ENCODE measurements at regions of chr15 and their contacts with region 1.

Region 1: DNA sequence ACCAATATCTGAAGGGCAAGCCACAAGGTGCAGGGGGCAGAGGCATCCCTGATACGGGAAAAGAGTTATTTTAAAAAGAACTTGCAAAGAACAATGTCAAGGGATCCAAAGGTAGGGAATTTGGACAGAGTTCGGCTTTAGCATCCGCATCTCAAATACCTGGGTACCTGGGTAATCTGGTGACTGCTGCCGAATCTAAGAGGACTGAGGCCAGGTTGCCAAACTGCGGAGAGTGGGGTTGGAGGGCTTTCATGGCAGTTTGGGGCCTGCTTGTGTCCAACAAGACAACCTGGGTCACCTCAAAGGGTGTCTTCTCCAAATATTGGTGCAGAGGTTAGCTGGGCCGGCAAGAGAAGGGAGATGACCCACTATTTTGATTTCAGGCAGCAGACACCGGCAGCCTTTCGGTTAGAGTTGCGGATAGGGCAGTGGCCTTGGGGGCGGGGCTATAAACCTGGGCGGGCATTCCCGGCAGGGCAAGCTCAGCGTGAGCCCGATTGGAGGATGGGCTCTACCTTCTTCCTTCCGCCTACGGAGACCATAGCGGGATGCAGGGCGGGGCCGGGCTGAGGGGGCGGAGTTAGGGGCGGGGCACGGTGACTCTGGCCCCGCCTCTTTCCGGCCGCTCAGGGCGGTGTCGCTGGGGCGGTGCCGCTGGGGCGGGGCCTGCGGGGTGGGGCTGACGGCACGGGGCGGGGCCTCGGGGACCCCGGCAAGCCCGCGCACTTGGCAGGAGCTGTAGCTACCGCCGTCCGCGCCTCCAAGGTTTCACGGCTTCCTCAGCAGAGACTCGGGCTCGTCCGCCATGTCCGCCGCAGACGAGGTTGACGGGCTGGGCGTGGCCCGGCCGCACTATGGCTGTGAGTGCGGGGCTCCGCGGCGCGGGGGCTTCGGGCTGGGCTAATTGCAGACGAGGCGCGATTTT is at the start of gene IQGAP1:
- DNase-seq: peak; percentile 88 to 97
- H3K4me3 ChIP-seq: peak within 1 kb of the TSS; percentile 55 to 88 (median 84)
- H3K27ac ChIP-seq: peak within 1 kb of the TSS; percentile 62; the same call in 1 of the 2 replicates
- H3K4me1 ChIP-seq: peaks cover 5 to 17% (median 11%) of the 10 kb centered on the region in 4 experiments
- H3K27me3 ChIP-seq: no peaks in the 10 kb centered on the region
- CTCF ChIP-seq: no peak; a peak in 1 of 4 replicates
- EP300 ChIP-seq: 0 out of 3 replicates have a peak, but pooled peaks of 1 of the 2 experiments have one; percentile 56
- POLR2A ChIP-seq: peak; percentile 65 to 73
- RAD21 ChIP-seq: peak; percentile 2 to 7; a peak in 2 of 4 replicates
- total RNA-seq, gene IQGAP1: 133 and 138 TPM in 2 replicates

Region 2: DNA sequence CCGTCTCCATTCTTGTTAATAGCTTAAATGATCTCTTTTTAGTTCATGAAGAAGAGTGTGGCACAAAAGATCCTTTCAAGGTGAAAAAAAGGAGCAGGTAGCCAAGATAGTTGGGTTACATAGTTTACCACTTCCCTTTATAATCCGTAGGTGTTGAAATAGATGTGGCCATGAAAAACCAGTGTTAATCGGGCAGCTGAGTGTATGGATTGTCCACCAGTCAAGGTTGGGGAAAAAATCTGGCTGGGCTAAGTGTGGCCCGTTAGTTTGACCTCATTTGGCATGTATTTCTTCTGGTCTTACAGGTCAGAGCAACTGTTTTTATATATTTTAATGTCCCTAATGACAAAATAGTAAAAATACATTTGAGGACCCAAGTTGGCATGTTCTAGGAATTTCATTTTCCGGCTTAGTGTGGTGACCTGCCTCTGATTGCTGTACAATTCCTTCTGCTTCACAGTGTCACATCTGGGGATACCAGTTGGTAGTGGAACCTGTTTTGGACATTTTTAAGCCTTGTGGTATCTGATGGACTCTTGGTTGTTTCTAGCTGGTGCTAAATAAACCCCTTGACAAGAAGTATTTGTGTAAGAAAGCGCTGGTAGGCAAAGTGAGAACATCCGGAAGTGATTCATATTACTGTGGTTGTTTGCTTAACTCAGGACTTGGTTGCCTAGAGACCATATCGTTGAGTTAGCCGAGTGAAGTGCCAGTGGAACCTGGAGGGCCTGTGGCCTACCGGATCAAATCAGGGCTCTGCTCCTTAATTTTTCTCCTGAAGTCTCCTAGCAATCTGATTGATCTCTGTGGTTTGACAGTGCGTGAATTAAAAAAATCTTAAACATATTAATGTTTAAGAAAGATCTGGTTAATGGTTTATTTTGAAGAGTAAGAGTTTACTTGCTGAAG is 12.9 kb after region 1 on chr15:
- CTCF ChIA-PET with region 1: interaction called, 8 read pairs
- POLR2A ChIA-PET with region 1: interaction called, 10 read pairs
- DNase-seq: no peak
- H3K4me3 ChIP-seq: peak overlapping the region in 2 of 4 experiments; percentile 15 to 31; a peak in 3 of 8 replicates
- H3K27ac ChIP-seq: peak overlapping the region; percentile 51
- H3K4me1 ChIP-seq: peaks cover 10 to 20% (median 15%) of the 10 kb centered on the region in 4 experiments
- H3K27me3 ChIP-seq: no peaks in the 10 kb centered on the region
- CTCF ChIP-seq: no peak
- EP300 ChIP-seq: peak in 1 of 2 experiments; percentile 72; a peak in 1 of 3 replicates
- POLR2A ChIP-seq: peak; percentile 27 to 45; a peak in 2 of 3 replicates
- RAD21 ChIP-seq: no peak

Measured in H1 (cell line).